CD4-positive, alpha-beta T cell (primary cell): ENCODE measurements at regions of chr14 and their contacts with region 1.

Region 1: GRCh38 chr14:24241829-24242443 is 487 bp downstream of the TINF2 start:
- DNase-seq: peak; percentile 85 to 97 (median 92)
- ATAC-seq: peak; percentile 80
- H3K4me3 ChIP-seq: peak overlapping the region; percentile 93
- H3K4me3 Mint-ChIP-seq: peak overlapping the region; percentile 99
- H3K27ac ChIP-seq: peak overlapping the region; percentile 97 to 100
- H3K27ac Mint-ChIP-seq: peak overlapping the region; percentile 100
- H3K4me1 ChIP-seq: peaks cover 63% of the 10 kb centered on the region
- H3K4me1 Mint-ChIP-seq: peaks cover 69% of the 10 kb centered on the region
- H3K27me3 ChIP-seq: no peaks in the 10 kb centered on the region
- H3K27me3 Mint-ChIP-seq: no peaks in the 10 kb centered on the region
- CTCF ChIP-seq: no peak

Region 2: GRCh38 chr14:24093901-24094761 is 147.8 kb before region 1 on chr14 and contains the start of gene PCK2:
- CTCF ChIA-PET with region 1: interaction called, 3 read pairs
- POLR2A ChIA-PET with region 1: interaction called, 14 read pairs
- intact Hi-C with region 1: no loop called
- DNase-seq: peak; percentile 53 to 82 (median 67)
- ATAC-seq: peak; percentile 77
- H3K4me3 ChIP-seq: peak within 1 kb of the TSS; percentile 97
- H3K4me3 Mint-ChIP-seq: peak within 1 kb of the TSS; percentile 97
- H3K27ac ChIP-seq: peak within 1 kb of the TSS; percentile 71 to 78
- H3K27ac Mint-ChIP-seq: peak within 1 kb of the TSS; percentile 90
- H3K4me1 ChIP-seq: peaks cover 29% of the 10 kb centered on the region
- H3K4me1 Mint-ChIP-seq: peaks cover 37% of the 10 kb centered on the region
- H3K27me3 ChIP-seq: no peaks in the 10 kb centered on the region
- H3K27me3 Mint-ChIP-seq: no peaks in the 10 kb centered on the region
- CTCF ChIP-seq: no peak
- total RNA-seq, gene PCK2: 5.2 to 7.4 TPM

Region 3: GRCh38 chr14:24146978-24147760 is 94.8 kb before region 1 on chr14 and contains the start of gene RNF31:
- CTCF ChIA-PET with region 1: interaction called, 4 read pairs
- POLR2A ChIA-PET with region 1: interaction called, 24 read pairs
- intact Hi-C with region 1: no loop called
- DNase-seq: peak; percentile 91 to 99 (median 97)
- ATAC-seq: peak; percentile 91
- H3K4me3 ChIP-seq: peak within 1 kb of the TSS; percentile 93
- H3K4me3 Mint-ChIP-seq: peak within 1 kb of the TSS; percentile 99
- H3K27ac ChIP-seq: peak within 1 kb of the TSS; percentile 76 to 82
- H3K27ac Mint-ChIP-seq: peak within 1 kb of the TSS; percentile 90
- H3K4me1 ChIP-seq: peaks cover 65% of the 10 kb centered on the region
- H3K4me1 Mint-ChIP-seq: peaks cover 61% of the 10 kb centered on the region
- H3K27me3 ChIP-seq: no peaks in the 10 kb centered on the region
- H3K27me3 Mint-ChIP-seq: no peaks in the 10 kb centered on the region
- CTCF ChIP-seq: no peak
- total RNA-seq, gene RNF31: 46.0 to 57.8 TPM

Region 4: GRCh38 chr14:24188251-24189058 is 53.5 kb before region 1 on chr14 and contains the start of gene IPO4:
- CTCF ChIA-PET with region 1: no interaction called
- POLR2A ChIA-PET with region 1: interaction called, 20 read pairs
- intact Hi-C with region 1: no loop called
- DNase-seq: peak; percentile 86 to 98 (median 94)
- ATAC-seq: peak; percentile 91
- H3K4me3 ChIP-seq: peak within 1 kb of the TSS; percentile 75
- H3K4me3 Mint-ChIP-seq: peak within 1 kb of the TSS; percentile 93
- H3K27ac ChIP-seq: peak within 1 kb of the TSS; percentile 70 to 88
- H3K27ac Mint-ChIP-seq: peak within 1 kb of the TSS; percentile 91
- H3K4me1 ChIP-seq: peaks cover 32% of the 10 kb centered on the region
- H3K4me1 Mint-ChIP-seq: peaks cover 45% of the 10 kb centered on the region
- H3K27me3 ChIP-seq: no peaks in the 10 kb centered on the region
- H3K27me3 Mint-ChIP-seq: no peaks in the 10 kb centered on the region
- CTCF ChIP-seq: no peak
- total RNA-seq, gene IPO4: 36.6 to 37.9 TPM

Region 5: DNA sequence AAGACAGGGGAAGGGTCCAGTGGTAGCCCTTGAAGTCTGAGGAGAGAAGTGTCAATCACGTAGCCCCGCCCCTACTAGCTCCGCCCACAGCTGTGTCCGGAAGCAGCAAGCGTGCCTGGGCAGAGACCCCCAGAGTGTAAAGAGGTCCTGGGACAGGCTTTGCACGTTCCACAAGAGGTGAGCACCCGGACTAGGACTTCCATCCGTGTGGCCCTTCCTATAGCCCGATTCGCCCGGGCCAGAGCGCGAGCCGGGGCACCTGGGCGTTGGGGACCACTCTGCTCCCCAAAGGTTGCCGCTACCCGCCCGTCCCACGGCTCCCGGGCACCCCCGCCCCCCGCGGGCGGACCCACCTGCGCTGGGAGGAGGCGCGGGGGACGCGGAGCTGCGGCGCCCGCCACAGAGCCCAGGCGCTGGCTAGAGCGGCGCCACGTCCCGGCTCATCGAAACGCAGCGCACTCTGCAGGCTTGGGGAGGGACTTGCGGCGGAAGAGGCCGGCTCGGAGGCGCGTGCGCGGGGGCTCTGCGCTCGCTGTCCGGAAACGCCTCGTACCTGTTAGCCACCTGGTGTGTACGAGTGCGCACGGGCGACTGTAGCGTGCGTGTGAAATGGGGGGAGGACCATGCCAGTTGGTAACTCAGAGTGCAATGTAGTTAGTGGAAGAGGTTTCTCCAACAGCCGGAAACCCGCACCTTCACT is 29.3 kb after region 1 on chr14 and contains the start of gene RABGGTA:
- CTCF ChIA-PET with region 1: interaction called, 20 read pairs
- POLR2A ChIA-PET with region 1: interaction called, 134 read pairs
- intact Hi-C with region 1: loop called (anchors 1 kb)
- DNase-seq: peak; percentile 84 to 99 (median 92)
- ATAC-seq: peak; percentile 83
- H3K4me3 ChIP-seq: peak within 1 kb of the TSS; percentile 86
- H3K4me3 Mint-ChIP-seq: peak within 1 kb of the TSS; percentile 96
- H3K27ac ChIP-seq: peak within 1 kb of the TSS; percentile 92 to 95
- H3K27ac Mint-ChIP-seq: peak within 1 kb of the TSS; percentile 97
- H3K4me1 ChIP-seq: peaks cover 43% of the 10 kb centered on the region
- H3K4me1 Mint-ChIP-seq: peaks cover 40% of the 10 kb centered on the region
- H3K27me3 ChIP-seq: no peaks in the 10 kb centered on the region
- H3K27me3 Mint-ChIP-seq: no peaks in the 10 kb centered on the region
- CTCF ChIP-seq: peak; percentile 75
- total RNA-seq, gene RABGGTA: 52.3 to 55.2 TPM

Region 6: GRCh38 chr14:24332268-24332993 is 90.5 kb after region 1 on chr14:
- CTCF ChIA-PET with region 1: interaction called, 21 read pairs
- POLR2A ChIA-PET with region 1: interaction called, 19 read pairs
- intact Hi-C with region 1: no loop called
- DNase-seq: peak; percentile 75 to 95 (median 84)
- ATAC-seq: peak; percentile 93
- H3K4me3 ChIP-seq: peak overlapping the region; percentile 48
- H3K4me3 Mint-ChIP-seq: peak overlapping the region; percentile 86
- H3K27ac ChIP-seq: no peak overlapping the region
- H3K27ac Mint-ChIP-seq: peak overlapping the region; percentile 52
- H3K4me1 ChIP-seq: peaks cover 78% of the 10 kb centered on the region
- H3K4me1 Mint-ChIP-seq: peaks cover 59% of the 10 kb centered on the region
- H3K27me3 ChIP-seq: peaks cover 26 to 27% of the 10 kb centered on the region in 2 experiments
- H3K27me3 Mint-ChIP-seq: peaks cover 49% of the 10 kb centered on the region
- CTCF ChIP-seq: peak; percentile 81